Activated T-helper 2 cell treated with anti-CD3 and anti-CD28 coated beads, Interferon-gamma antibody, Interleukin-2, Interleukin-4, amounts not matched to agents 10 μg/mL and 5 μg/mL and 100 μg/mL, durations not matched to agents 14 hours and 24 hours and 36 hours (primary cell): ENCODE measurements at regions of chr14 and their contacts with region 1.

Region 1: GRCh38 chr14:59464486-59465315 is 479 bp downstream of the GPR135 start:
- DNase-seq: peak; percentile 43
- H3K4me3 Mint-ChIP-seq: peak overlapping the region; percentile 84
- H3K27ac Mint-ChIP-seq: peak overlapping the region; percentile 58
- H3K4me1 Mint-ChIP-seq: peaks cover 6% of the 10 kb centered on the region
- H3K27me3 Mint-ChIP-seq: peaks cover 3% of the 10 kb centered on the region

Region 2: GRCh38 chr14:59028476-59029202 is 436.1 kb before region 1 on chr14:
- intact Hi-C with region 1: loop called (anchors 10 kb)
- DNase-seq: no peak
- H3K4me3 Mint-ChIP-seq: no peak overlapping the region
- H3K27ac Mint-ChIP-seq: no peak overlapping the region
- H3K4me1 Mint-ChIP-seq: peaks cover 4% of the 10 kb centered on the region
- H3K27me3 Mint-ChIP-seq: peaks cover 7% of the 10 kb centered on the region

Region 3: DNA sequence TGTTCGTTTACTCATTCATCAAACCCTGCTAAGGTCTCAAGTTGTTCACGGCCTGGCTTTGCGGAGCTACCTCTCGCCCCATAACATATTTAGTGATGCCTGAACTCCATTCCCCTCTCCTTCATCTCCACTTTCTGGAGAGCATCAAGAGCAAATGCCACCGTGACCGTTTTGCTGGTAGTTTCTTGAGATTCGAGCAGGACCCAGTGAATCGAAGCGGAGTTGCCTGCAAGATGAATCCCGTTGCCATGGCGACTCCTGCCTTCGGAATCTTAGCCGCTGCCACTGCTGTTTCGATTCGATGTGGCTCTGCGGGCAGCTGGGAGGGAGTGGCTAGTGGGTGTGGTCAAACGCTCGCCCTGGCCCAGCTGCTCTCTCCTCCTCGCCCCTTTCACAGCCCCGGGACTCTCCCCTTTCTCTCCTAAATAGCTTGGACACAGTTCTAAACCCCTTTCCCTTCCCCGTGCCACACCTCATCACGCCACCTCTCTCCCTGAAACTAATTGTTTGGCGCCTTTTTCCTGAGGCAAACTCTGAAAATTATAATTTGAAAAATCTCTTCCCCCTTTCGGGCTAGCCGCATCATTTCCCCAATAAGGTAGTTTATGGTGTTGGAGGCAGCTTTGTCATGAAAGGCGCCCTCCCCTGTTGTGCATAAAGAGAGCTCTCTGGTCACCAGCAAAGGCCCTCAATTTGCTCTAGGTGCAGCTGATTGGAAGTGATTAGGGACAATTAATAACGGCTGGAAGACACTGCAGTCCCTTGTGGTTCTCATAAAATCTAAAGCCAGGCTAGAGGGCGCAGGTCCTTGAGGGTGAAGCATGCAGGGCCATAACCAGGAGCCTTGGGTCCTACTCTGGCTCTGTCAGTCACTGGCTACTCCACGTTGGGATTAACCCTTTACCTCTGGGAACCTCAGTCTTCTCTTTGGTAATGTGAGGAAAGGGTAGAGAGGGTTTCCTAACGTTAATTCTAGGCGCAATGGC is 274.6 kb before region 1 on chr14:
- intact Hi-C with region 1: loop called (anchors 5 kb)
- DNase-seq: peak; percentile 79
- H3K4me3 Mint-ChIP-seq: peak overlapping the region; percentile 95
- H3K27ac Mint-ChIP-seq: peak overlapping the region; percentile 61
- H3K4me1 Mint-ChIP-seq: peaks cover 17% of the 10 kb centered on the region
- H3K27me3 Mint-ChIP-seq: peaks cover 13% of the 10 kb centered on the region

Region 4: GRCh38 chr14:59438195-59438647 is 26.5 kb before region 1 on chr14:
- intact Hi-C with region 1: no loop called
- DNase-seq: no peak
- H3K4me3 Mint-ChIP-seq: no peak overlapping the region
- H3K27ac Mint-ChIP-seq: no peak overlapping the region
- H3K4me1 Mint-ChIP-seq: no peaks in the 10 kb centered on the region
- H3K27me3 Mint-ChIP-seq: peaks cover 2% of the 10 kb centered on the region

Region 5: GRCh38 chr14:59483900-59484638 is 19.4 kb after region 1 on chr14 and contains the starts of genes JKAMP and L3HYPDH:
- intact Hi-C with region 1: loop called (anchors 1 kb)
- DNase-seq: peak; percentile 95
- H3K4me3 Mint-ChIP-seq: peak within 1 kb of the TSS; percentile 91
- H3K27ac Mint-ChIP-seq: peak within 1 kb of the TSS; percentile 84
- H3K4me1 Mint-ChIP-seq: peaks cover 47% of the 10 kb centered on the region
- H3K27me3 Mint-ChIP-seq: no peaks in the 10 kb centered on the region
- total RNA-seq, gene JKAMP: 26.0 and 29.6 TPM in 2 replicates
- total RNA-seq, gene L3HYPDH: 14.2 and 15.9 TPM in 2 replicates

Region 6: DNA sequence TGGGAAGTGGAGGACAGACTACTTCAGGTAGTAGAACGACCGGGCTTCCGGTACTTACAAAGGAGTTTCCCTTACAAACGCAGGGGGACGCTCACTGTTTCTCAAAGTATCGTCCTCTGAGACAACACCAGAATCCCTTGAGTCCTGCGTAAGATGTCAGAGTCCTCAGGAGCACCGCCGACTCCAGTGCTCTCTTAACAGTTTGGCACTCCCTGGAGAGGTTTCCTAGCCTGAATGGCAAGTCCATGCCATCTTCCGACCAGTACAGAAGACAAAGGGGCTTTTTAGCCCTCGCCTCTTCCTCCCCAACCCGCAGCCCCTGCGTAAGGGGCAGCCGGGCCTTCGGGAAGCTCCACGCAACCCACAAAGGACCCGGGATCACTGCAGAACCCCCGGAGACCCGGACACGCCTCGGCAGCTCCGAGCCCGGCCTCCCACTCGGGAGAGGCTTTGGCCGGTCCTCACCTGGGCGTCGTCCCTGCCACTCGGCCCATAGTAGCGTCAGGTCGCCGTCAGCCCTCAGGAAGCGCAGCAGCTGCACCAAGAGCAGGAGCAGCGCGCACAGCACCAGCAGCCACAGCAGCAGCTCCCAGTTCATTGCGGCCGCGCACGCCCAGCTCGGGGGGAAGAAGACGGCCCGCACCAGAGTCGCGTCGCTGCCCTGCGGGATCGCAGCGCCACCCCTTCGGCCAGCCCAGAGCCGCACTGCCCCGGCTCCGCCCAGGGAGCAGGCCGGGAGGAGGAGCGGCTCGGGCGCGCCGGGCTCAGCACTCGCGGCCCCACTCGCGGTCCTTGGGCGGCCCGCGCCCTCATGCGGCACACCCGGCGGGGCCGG is 700.2 kb after region 1 on chr14 and contains the start of gene DHRS7:
- intact Hi-C with region 1: loop called (anchors 10 kb)
- DNase-seq: peak; percentile 58
- H3K4me3 Mint-ChIP-seq: peak within 1 kb of the TSS; percentile 94
- H3K27ac Mint-ChIP-seq: peak within 1 kb of the TSS; percentile 95
- H3K4me1 Mint-ChIP-seq: peaks cover 25% of the 10 kb centered on the region
- H3K27me3 Mint-ChIP-seq: no peaks in the 10 kb centered on the region
- total RNA-seq, gene DHRS7: 52.9 and 55.8 TPM in 2 replicates